ENCODE measurements at regions of chr17 and their contacts with region 1.

Region 1: DNA sequence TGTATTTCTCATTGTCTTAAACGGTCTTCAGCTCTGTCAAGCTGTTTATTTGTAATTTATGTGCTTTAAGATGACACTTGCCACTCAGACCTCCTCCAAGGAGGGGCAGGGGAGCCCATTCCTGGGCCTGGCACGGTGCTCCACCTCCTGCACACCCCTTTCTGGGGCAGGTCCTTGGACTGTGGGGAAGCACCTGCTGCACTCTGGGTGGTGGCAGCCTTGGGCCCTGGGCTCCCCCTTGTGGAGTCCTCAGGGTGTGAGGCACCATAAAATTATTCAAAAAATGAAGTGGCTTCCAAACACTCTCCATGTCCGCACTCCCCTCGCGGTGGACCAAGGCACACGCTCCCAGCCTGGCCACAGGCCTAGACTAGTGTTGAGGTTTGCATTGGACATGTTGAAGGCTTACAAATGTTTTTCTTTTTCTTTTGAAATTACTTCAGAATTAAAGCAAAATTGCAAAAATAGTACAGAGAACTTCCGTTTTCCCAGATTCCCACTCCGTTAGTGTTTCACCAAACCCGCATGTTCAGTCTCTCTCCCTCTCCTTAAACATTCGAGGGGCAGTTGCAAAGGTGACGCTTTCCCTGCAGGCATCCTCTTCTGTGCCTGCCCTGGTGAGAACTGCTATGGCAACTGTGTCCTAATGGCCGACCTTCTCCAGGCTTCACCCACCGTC is 32.4 kb downstream of the FOXK2 start:
- DNase-seq: peak; percentile 74 to 90 (median 88)
- ATAC-seq: peak; percentile 79 to 86
- H3K4me3 ChIP-seq: no peak overlapping the region
- H3K27ac ChIP-seq: peak overlapping the region; percentile 7
- H3K4me1 ChIP-seq: peaks cover 18% of the 10 kb centered on the region
- H3K27me3 ChIP-seq: no peaks in the 10 kb centered on the region

Region 2: GRCh38 chr17:82257473-82257872 is 294.4 kb before region 1 on chr17:
- intact Hi-C with region 1: no loop called
- DNase-seq: peak in 2 of 3 donors; percentile 81
- ATAC-seq: peak; percentile 75 to 78
- H3K4me3 ChIP-seq: no peak overlapping the region
- H3K27ac ChIP-seq: no peak overlapping the region
- H3K4me1 ChIP-seq: no peaks in the 10 kb centered on the region
- H3K27me3 ChIP-seq: no peaks in the 10 kb centered on the region

Region 3: GRCh38 chr17:82358465-82359350 is 193.2 kb before region 1 on chr17 and contains the start of gene TEX19:
- intact Hi-C with region 1: loop called in 3 of 4 experiments (anchors 2 to 10 kb)
- DNase-seq: no peak
- ATAC-seq: no peak
- H3K4me3 ChIP-seq: no peak within 1 kb of the TSS
- H3K27ac ChIP-seq: no peak within 1 kb of the TSS
- H3K4me1 ChIP-seq: no peaks in the 10 kb centered on the region
- H3K27me3 ChIP-seq: no peaks in the 10 kb centered on the region
- total RNA-seq, gene TEX19: not detected

Region 4: GRCh38 chr17:82494236-82495055 is 57.5 kb before region 1 on chr17:
- intact Hi-C with region 1: loop called in 2 of 4 experiments (anchors 5 kb)
- DNase-seq: peak; percentile 87 to 95 (median 93)
- ATAC-seq: peak; percentile 86 to 89
- H3K4me3 ChIP-seq: no peak overlapping the region
- H3K27ac ChIP-seq: peak overlapping the region; percentile 29
- H3K4me1 ChIP-seq: no peaks in the 10 kb centered on the region
- H3K27me3 ChIP-seq: no peaks in the 10 kb centered on the region